A673 (cell line): ENCODE measurements at regions of chr2 and their contacts with region 1.

Region 1: DNA sequence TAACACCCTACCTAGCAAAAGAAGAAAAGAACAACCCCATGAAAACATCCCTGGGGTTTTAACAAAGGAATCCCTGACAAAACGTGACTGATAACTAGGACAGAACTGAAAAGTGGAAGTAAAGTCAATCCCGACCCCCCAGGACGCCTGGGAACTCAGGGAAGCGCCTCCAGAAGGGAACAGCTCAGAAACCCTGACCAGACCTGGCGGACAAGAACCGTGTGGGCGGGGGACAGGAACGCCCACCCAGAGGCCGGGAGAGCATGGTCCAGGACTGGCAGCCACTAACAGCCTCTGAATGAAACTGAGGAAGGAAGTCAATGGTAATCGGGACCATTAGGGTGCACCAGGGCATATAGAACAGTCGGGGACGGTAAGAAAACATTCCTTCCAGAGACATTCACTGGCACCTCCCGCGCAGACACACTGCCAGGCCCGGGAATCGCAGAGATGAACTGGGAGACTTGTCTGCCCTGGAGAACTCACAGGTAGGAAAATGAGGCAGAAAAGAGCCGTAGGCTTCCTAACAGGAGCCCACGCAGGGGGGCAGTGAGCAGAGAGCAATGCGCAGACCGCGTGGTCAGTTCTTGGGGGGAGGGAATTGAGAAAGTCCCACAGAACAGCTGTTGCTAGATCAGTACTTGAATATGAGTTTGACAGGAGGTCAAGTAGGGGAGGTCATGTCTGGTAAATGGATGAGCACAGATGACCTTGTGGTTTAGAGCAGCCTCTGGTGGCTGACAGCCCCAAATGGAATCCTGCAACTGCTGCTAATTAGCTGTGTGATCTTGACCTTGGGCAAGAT is 1.3 kb upstream of the TBC1D8 start:
- DNase-seq: peak; percentile 28
- H3K4me3 ChIP-seq: peak overlapping the region; percentile 67
- H3K27ac ChIP-seq: no peak overlapping the region
- H3K4me1 ChIP-seq: peaks cover 13% of the 10 kb centered on the region
- H3K27me3 ChIP-seq: no peaks in the 10 kb centered on the region
- CTCF ChIP-seq: peak; percentile 57

Region 2: DNA sequence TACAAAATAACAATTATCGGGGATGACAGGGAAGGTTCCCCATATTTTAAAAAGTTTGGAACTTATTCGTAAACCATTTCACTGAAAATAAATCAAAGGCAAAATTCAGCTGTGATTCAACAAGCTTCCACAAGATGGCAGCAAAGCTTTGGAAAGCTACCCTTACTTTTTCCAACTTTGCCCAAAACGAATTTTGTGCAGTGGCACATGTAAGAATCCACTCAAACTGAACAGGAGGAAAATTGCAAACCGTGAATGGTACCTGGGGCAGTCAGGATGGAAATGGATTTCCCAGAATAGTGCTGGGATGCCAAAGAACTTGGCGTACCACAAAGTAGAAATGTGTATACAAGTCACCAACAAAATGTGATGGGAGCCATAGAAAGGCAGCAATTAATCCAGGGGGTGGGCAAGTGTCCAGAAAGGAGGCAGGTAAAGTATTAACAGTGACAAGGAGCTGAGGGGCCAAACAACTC is 139.7 kb before region 1 on chr2:
- CTCF ChIA-PET with region 1: no interaction called
- POLR2A ChIA-PET with region 1: no interaction called
- intact Hi-C with region 1: loop called (anchors 2 kb)
- DNase-seq: peak; percentile 62
- H3K4me3 ChIP-seq: no peak overlapping the region
- H3K27ac ChIP-seq: no peak overlapping the region
- H3K4me1 ChIP-seq: no peaks in the 10 kb centered on the region
- H3K27me3 ChIP-seq: no peaks in the 10 kb centered on the region
- CTCF ChIP-seq: peak; percentile 84

Region 3: GRCh38 chr2:101036562-101037457 is 115.7 kb before region 1 on chr2:
- CTCF ChIA-PET with region 1: interaction called, 3 read pairs
- POLR2A ChIA-PET with region 1: interaction called, 6 read pairs
- intact Hi-C with region 1: loop called (anchors 2 kb)
- DNase-seq: peak; percentile 42
- H3K4me3 ChIP-seq: no peak overlapping the region
- H3K27ac ChIP-seq: no peak overlapping the region
- H3K4me1 ChIP-seq: no peaks in the 10 kb centered on the region
- H3K27me3 ChIP-seq: no peaks in the 10 kb centered on the region
- CTCF ChIP-seq: peak; percentile 61

Region 4: GRCh38 chr2:101328474-101329007 is 176.1 kb after region 1 on chr2:
- CTCF ChIA-PET with region 1: no interaction called
- POLR2A ChIA-PET with region 1: no interaction called
- intact Hi-C with region 1: no loop called
- DNase-seq: peak; percentile 32
- H3K4me3 ChIP-seq: no peak overlapping the region
- H3K27ac ChIP-seq: no peak overlapping the region
- H3K4me1 ChIP-seq: no peaks in the 10 kb centered on the region
- H3K27me3 ChIP-seq: no peaks in the 10 kb centered on the region
- CTCF ChIP-seq: no peak